ENCODE measurements at regions of chr1 and their contacts with region 1.

Region 1: DNA sequence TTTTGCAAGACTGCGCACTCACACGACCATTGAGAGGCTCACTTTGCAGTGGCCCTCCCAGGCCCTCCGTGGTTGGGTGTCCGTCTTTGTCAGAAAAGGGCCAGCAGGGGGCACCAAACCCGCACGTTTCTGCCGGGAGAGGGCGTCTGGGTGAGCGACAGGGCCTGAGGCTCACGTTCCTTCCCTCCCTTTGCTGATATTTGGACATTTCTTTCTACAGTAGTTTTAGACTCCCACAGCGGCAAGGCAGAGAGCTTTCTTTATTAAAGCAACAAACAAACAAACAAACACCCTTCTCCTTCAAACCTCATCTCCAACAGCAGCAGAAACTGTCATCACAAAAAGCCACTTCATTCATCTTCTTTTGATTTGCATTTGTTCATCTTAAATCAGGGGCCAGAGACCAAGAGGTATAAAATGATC is 79.2 kb upstream of the WDR26 start:
- H3K4me3 ChIP-seq: no peak overlapping the region
- H3K27ac ChIP-seq: no peak overlapping the region
- H3K4me1 ChIP-seq: 0 out of 2 replicates have a peak, but pooled peaks cover 3% of the 10 kb centered on the region
- CTCF ChIP-seq: peak; percentile 100

Region 2: DNA sequence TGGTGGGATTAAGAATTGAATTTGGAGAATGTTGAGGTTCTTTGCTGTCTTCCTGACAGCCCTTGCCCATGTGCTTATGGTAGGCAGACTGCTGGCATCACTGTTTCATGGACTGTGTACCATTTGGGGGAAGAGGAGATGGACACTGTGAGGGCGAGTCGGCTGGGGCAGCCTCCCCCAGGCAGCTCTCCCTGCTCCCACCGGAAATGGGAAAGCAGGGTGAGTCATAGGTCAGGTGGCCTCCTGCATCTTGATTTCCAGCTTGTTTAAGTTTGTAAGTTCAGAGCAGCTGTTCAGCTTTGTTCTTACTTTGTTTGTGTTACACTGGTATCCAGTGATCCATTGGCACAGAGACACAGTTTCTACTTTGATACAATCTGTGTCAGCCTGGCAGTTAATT is 15.1 kb after region 1 on chr1:
- CTCF ChIA-PET with region 1: interaction called, 85 read pairs
- POLR2A ChIA-PET with region 1: no interaction called
- H3K4me3 ChIP-seq: no peak overlapping the region
- H3K27ac ChIP-seq: no peak overlapping the region
- H3K4me1 ChIP-seq: no peaks in the 10 kb centered on the region
- CTCF ChIP-seq: no peak

Region 3: GRCh38 chr1:224582041-224582440 is 68.2 kb after region 1 on chr1:
- CTCF ChIA-PET with region 1: no interaction called
- POLR2A ChIA-PET with region 1: no interaction called
- H3K4me3 ChIP-seq: no peak overlapping the region
- H3K27ac ChIP-seq: no peak overlapping the region
- H3K4me1 ChIP-seq: peaks cover 3% of the 10 kb centered on the region; the same call in 1 of the 2 replicates
- CTCF ChIP-seq: no peak

Region 4: GRCh38 chr1:224623743-224624333 is 110.0 kb after region 1 on chr1:
- CTCF ChIA-PET with region 1: interaction called, 100 read pairs
- POLR2A ChIA-PET with region 1: no interaction called
- H3K4me3 ChIP-seq: no peak overlapping the region
- H3K27ac ChIP-seq: peak overlapping the region; percentile 35
- H3K4me1 ChIP-seq: peaks cover 30% of the 10 kb centered on the region
- CTCF ChIP-seq: no peak

Region 5: GRCh38 chr1:224676528-224676927 is 162.7 kb after region 1 on chr1:
- CTCF ChIA-PET with region 1: interaction called, 14 read pairs
- POLR2A ChIA-PET with region 1: no interaction called
- H3K4me3 ChIP-seq: no peak overlapping the region
- H3K27ac ChIP-seq: no peak overlapping the region
- H3K4me1 ChIP-seq: no peaks in the 10 kb centered on the region; the same call in 1 of the 2 replicates
- CTCF ChIP-seq: no peak

Region 6: DNA sequence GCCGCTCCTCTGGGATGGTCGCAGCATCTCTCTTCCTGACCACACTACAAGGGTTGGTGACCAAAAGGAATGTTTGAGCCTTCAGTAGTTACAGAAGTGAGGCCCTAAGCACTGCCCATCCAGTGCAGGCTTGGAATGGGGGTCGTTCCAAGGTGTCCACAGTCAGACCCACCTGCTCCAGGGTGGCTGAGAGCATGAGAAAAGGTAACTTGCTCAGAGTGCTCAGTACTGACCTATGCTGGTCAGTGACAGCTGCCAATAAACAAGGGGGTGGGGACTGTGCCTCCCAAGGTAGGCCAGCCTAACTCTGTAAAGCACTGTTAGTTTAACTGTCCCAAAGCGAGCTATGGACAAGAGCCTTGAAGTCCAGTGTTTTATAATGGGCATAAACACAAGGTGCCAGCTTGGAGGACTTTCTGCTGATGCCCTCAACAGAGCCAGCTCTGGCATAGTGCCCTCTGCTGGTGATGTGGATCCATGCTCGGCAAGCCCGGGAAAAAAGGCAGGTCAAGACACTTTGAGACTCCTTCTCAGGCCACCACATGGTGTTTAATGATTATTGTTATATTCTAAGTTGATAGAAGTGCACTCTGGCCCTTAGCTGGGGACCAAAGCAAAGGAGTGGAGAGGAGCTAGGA is 337.5 kb after region 1 on chr1:
- CTCF ChIA-PET with region 1: interaction called, 273 read pairs
- POLR2A ChIA-PET with region 1: no interaction called
- H3K4me3 ChIP-seq: no peak overlapping the region
- H3K27ac ChIP-seq: no peak overlapping the region
- H3K4me1 ChIP-seq: no peaks in the 10 kb centered on the region
- CTCF ChIP-seq: peak; percentile 83

Region 7: DNA sequence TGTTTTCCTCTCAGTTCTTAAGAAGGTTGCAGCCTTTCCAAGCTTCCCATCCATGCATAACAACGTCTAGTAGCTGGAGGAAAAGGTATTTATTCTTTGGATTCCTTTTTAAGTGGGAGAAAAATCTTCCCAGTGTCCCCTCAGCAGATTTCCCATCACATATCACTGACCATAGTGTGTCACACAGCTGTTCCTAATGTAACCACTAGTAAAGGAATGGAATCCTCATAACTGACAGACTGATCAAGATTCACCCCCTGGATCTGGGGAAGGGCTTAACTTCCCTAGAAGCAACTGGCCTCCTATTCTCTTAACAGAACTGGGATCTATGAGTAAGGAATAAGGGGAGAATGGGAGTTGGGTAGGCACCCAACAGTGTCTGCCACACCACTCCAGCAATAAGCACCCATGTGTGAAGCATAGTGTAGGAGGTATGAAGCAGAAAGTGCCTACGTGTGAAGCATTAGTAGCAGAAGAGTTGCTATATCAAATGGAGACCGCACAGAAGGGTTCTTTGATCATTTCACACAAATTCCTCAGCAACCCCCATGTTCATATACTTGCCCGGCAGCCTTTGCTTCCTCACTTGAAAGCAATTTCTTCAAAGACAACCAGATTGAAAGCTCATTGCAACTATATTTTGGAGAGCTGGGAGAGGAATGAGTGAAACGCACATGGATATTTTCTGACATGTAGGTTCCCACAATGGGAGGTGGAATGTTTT is 387.5 kb after region 1 on chr1:
- CTCF ChIA-PET with region 1: interaction called, 84 read pairs
- POLR2A ChIA-PET with region 1: no interaction called
- H3K4me3 ChIP-seq: no peak overlapping the region
- H3K27ac ChIP-seq: no peak overlapping the region
- H3K4me1 ChIP-seq: no peaks in the 10 kb centered on the region
- CTCF ChIP-seq: no peak

Measured in HEK293 (cell line).